Calu3 (cell line): ENCODE measurements at regions of chrX and their contacts with region 1.

Region 1: DNA sequence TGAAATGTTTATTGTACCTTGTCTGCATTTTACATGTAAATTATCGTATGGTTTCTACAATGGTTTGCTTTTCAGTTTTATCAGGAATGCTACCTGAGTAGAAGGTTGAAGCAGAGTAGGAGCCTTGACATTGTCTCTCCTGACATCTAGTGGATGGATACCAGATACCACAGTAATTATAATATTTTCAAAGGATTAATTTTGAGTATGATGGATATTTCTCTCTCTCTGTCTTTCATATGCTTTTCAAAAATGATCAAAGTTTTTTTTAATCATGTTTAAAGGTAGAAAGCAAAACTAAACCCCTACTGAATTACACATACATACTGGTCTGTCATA is 109.4 kb upstream of the KLHL13 start:
- DNase-seq: no peak
- H3K4me3 Mint-ChIP-seq: no peak overlapping the region
- H3K27ac Mint-ChIP-seq: no peak overlapping the region
- H3K4me1 Mint-ChIP-seq: peaks cover 10% of the 10 kb centered on the region
- H3K27me3 Mint-ChIP-seq: no peaks in the 10 kb centered on the region
- CTCF ChIP-seq: no peak

Region 2: GRCh38 chrX:116862340-116862739 is 1363.7 kb before region 1 on chrX:
- CTCF ChIA-PET with region 1: no interaction called
- intact Hi-C with region 1: loop called (anchors 10 kb)
- DNase-seq: no peak
- H3K4me3 Mint-ChIP-seq: no peak overlapping the region
- H3K27ac Mint-ChIP-seq: no peak overlapping the region
- H3K4me1 Mint-ChIP-seq: no peaks in the 10 kb centered on the region
- H3K27me3 Mint-ChIP-seq: no peaks in the 10 kb centered on the region
- CTCF ChIP-seq: no peak

Region 3: GRCh38 chrX:117996918-117997480 is 229.1 kb before region 1 on chrX:
- CTCF ChIA-PET with region 1: interaction called, 4 read pairs
- intact Hi-C with region 1: loop called (anchors 1 kb)
- DNase-seq: no peak
- H3K4me3 Mint-ChIP-seq: no peak overlapping the region
- H3K27ac Mint-ChIP-seq: no peak overlapping the region
- H3K4me1 Mint-ChIP-seq: no peaks in the 10 kb centered on the region
- H3K27me3 Mint-ChIP-seq: no peaks in the 10 kb centered on the region
- CTCF ChIP-seq: no peak

Region 4: DNA sequence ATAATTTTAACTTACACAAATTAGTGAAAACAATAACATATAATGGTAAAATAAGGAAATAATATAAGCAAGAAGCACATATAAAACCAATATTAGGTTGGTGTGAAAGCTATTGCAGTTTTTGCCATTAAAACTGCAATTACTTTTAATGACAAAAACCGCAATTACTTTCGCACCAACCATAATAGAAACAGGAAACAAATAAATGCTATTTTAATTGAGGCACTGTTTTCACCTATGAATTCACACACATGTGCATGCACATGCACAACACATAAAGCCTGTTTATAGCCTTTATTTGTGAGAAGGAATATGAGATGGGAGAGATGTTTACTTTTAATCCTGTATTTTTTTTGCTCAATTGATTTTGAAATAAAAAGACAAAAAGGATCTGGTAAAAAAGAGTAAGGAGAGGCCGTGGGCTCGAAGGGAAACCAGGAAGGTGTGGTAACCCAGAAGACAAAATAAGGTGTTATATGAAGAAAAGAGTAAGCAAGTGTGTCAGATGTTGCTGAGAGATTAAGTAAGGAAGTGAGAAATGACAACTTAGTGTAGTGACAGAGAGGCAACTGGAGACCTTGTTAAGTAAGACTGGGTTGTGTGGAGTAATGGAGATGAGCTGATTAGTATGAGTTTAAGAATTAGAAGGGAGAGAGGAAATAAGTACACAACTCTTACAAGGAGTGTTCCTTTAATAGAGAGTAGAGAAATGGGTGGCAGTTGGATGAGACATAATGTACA is 178.4 kb before region 1 on chrX:
- CTCF ChIA-PET with region 1: no interaction called
- intact Hi-C with region 1: no loop called
- DNase-seq: no peak
- H3K4me3 Mint-ChIP-seq: no peak overlapping the region
- H3K27ac Mint-ChIP-seq: no peak overlapping the region
- H3K4me1 Mint-ChIP-seq: no peaks in the 10 kb centered on the region
- H3K27me3 Mint-ChIP-seq: no peaks in the 10 kb centered on the region
- CTCF ChIP-seq: no peak

Region 5: DNA sequence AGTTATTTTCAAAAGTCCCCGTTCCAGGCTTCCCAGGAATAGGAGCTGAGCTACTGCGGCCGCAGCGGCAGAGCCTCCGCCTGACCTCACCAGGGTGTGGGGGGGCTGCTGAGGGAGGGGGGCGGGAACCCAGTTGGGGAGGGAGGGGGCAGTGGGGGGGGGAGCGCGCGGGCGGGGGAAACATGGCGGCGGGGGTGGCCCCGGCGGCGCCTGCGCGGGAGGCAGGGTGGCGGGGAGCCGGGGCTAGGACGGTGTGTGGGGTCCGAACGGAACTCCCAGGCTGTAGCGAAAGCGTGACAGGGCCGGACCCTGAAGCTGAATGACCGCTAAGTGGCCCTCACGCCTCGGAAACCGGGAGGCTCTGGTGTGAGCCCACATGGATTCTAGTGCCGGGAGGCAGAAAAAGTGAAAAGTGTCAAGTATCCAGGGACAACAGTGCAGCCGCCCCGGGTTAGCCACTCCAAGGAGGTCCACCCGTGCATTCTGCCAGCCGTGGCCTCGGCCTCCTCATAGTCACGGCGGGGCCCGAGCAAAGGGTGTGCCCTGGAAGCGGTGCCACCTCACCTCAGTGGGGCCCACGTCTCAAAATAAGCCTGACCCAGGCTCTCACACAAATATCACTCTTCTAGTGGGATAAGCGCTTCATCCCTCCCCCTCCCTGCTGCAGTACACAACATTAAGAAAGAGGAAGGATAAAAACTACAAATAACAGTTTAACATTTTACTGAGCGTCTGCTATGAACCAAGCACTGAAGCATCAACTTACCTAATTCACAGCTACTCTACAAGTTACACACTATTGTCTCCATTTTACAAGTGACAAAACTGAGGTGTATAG is 109.1 kb before region 1 on chrX and contains the start of gene KLHL13:
- CTCF ChIA-PET with region 1: no interaction called
- intact Hi-C with region 1: loop called (anchors 10 kb)
- DNase-seq: peak; percentile 13
- H3K4me3 Mint-ChIP-seq: peak within 1 kb of the TSS; percentile 62
- H3K27ac Mint-ChIP-seq: no peak within 1 kb of the TSS
- H3K4me1 Mint-ChIP-seq: no peaks in the 10 kb centered on the region
- H3K27me3 Mint-ChIP-seq: peaks cover 28% of the 10 kb centered on the region
- CTCF ChIP-seq: no peak
- total RNA-seq, gene KLHL13: 0.64 and 0.95 TPM in 2 replicates